ENCODE measurements at regions of chr15 and their contacts with region 1.

Region 1: DNA sequence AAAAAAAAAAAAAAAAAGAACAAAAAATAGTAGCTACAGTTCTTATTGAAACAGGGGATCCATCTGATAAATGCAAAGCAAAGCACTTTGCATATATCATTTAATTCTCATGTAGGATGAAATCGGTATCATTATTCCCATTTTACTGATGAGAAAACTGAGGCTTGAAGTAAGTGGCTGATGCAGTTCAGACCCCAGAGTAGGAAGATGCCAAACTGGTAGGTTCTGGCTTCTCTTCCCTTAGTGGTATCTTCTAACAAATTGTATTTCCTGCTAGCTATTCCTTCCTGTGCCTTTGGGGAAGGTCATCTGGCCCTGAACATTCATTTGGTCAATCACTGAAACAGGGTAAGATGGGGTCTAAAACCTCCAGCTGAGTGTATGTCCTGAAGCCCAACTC is 21.9 kb downstream of the PIF1 start:
- DNase-seq: no peak
- ATAC-seq: no peak
- H3K4me3 Mint-ChIP-seq: no peak overlapping the region
- H3K27ac Mint-ChIP-seq: no peak overlapping the region
- H3K4me1 Mint-ChIP-seq: no peaks in the 10 kb centered on the region
- H3K27me3 Mint-ChIP-seq: no peaks in the 10 kb centered on the region

Region 2: DNA sequence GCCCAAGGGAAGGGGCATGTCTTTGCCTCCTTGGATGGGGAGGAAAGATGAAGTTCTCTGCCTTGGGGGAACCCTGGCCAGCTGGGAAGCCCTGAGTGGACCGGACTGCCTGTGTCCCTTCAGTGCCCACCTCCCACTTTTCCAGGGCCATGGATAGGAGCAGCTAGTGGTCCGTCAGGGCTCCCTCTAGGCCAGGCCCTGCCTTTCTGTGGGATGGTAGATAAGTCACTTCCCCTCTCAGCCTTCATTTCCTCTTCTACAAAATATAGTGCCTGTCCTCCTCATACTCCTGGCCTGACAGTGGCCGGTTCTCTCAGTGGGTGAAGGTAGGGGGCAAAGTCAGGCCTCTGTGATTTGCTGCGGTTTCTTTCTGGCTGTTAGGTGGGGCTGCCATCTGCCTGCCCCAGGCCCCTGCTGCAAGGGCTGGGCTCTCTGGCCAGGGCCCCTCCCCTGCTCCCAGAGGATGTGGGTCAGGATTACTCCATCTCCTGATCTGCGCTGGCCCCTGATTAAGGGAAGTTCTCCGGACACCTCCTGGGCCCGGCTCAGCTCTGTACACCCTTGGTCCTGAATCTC is 39.5 kb after region 1 on chr15:
- CTCF ChIA-PET with region 1: no interaction called
- POLR2A ChIA-PET with region 1: no interaction called
- DNase-seq: no peak
- ATAC-seq: no peak
- H3K4me3 Mint-ChIP-seq: peak overlapping the region; percentile 90
- H3K27ac Mint-ChIP-seq: peak overlapping the region; percentile 90
- H3K4me1 Mint-ChIP-seq: peaks cover 76% of the 10 kb centered on the region
- H3K27me3 Mint-ChIP-seq: no peaks in the 10 kb centered on the region

Region 3: GRCh38 chr15:65008983-65009382 is 205.5 kb after region 1 on chr15:
- CTCF ChIA-PET with region 1: no interaction called
- POLR2A ChIA-PET with region 1: interaction called, 13 read pairs
- DNase-seq: no peak
- ATAC-seq: no peak
- H3K4me3 Mint-ChIP-seq: no peak overlapping the region
- H3K27ac Mint-ChIP-seq: no peak overlapping the region
- H3K4me1 Mint-ChIP-seq: no peaks in the 10 kb centered on the region
- H3K27me3 Mint-ChIP-seq: no peaks in the 10 kb centered on the region